Panc1 (cell line): ENCODE measurements at regions of chr9 and their contacts with region 1.

Region 1: GRCh38 chr9:101530077-101530711 is 3.5 kb upstream of the RNF20 start:
- DNase-seq: peak; percentile 61
- ATAC-seq: peak; percentile 65
- H3K4me3 ChIP-seq: no peak overlapping the region
- H3K27ac ChIP-seq: no peak overlapping the region
- H3K4me1 ChIP-seq: peaks cover 7% of the 10 kb centered on the region; the same call in 1 of the 2 replicates
- H3K27me3 ChIP-seq: no peaks in the 10 kb centered on the region
- CTCF ChIP-seq: peak; percentile 77

Region 2: DNA sequence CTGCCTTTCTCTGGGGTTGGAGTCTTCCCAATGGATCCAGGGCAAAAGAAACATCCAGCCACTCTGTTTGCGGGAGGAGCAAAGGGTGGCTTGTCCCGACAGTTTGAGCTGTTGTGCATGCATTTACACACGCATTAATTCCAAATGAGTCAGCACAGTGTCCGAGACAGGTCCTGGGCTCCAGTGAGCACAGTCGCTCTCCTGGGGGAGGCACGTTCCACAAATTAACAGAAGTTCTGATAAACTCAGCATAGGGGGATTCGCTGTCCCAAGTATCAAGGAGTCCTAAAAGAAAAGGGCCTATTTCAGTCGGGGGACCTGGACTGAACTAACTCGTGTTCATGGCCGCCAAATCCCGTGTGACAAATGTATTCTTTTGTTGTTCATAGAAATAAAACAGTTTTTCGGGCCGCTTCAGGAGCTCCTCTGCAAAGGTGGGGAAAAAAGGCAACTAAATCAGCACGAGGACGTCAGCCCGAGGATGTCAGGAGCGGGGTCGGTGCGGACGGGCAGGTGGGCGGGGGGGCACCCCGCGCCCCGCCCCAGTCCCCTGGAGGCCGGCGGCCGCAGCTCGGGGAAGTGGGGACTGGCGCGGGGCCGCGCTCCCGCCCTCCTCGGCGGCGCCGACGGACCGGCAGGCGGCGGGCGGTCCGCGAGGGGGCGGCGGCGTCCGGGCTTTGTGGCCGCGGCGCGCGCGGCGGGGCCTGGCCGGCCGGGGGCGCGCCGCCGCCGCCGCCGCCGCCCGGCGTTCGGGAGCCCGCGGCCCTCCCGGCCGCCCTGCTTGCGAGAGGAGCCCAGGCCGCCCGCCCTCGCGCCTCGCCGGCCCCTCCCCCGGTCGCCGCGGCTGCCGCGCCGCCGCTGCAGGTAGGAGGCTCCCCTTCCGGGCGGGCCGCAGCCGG is 1103.4 kb before region 1 on chr9 and contains the start of gene MSANTD3:
- CTCF ChIA-PET with region 1: no interaction called
- POLR2A ChIA-PET with region 1: interaction called, 15 read pairs
- in situ Hi-C with region 1: no loop called
- intact Hi-C with region 1: no loop called
- DNase-seq: no peak
- ATAC-seq: peak; percentile 84
- H3K4me3 ChIP-seq: peak within 1 kb of the TSS; percentile 72 to 90
- H3K27ac ChIP-seq: peak within 1 kb of the TSS; percentile 94
- H3K4me1 ChIP-seq: peaks cover 20% of the 10 kb centered on the region
- H3K27me3 ChIP-seq: no peaks in the 10 kb centered on the region
- CTCF ChIP-seq: 0 out of 2 replicates have a peak, but pooled peaks have one; percentile 16
- total RNA-seq, gene MSANTD3: 58.7 TPM

Region 3: DNA sequence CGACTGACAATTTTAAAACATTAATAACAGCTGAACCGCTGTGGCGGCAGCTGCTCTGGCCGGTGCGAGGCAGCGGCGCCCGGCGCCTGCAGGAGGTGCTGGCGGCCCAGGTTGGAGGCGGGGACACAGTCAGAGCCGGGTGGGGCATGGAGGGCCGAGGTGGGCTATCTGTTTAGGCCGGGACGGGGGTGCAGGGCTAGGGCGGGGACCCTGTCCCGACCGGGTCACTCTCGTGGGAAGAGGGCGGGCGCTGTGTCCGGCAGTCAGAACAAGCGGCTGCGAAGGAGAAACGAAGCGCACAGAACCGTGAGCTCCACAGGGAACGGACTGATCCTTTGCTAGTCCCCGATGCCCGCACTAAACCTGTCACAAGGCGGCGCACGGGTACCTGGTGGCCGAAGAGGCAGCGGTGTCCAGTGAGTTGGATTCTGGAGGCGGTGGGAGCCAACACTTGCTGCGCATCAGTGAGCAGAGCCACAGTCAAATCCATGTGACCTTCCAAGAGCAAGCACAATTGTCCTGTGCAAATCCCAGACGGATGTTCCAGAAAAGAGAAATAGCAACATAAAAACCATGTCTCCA is 81.0 kb before region 1 on chr9:
- CTCF ChIA-PET with region 1: interaction called, 5 read pairs
- POLR2A ChIA-PET with region 1: no interaction called
- in situ Hi-C with region 1: no loop called
- intact Hi-C with region 1: loop called (anchors 2 kb)
- DNase-seq: peak; percentile 51
- ATAC-seq: peak; percentile 100
- H3K4me3 ChIP-seq: peak overlapping the region; percentile 52 to 56
- H3K27ac ChIP-seq: no peak overlapping the region
- H3K4me1 ChIP-seq: no peaks in the 10 kb centered on the region
- H3K27me3 ChIP-seq: peaks cover 2% of the 10 kb centered on the region; the same call in 1 of the 2 replicates
- CTCF ChIP-seq: peak; percentile 93

Region 4: DNA sequence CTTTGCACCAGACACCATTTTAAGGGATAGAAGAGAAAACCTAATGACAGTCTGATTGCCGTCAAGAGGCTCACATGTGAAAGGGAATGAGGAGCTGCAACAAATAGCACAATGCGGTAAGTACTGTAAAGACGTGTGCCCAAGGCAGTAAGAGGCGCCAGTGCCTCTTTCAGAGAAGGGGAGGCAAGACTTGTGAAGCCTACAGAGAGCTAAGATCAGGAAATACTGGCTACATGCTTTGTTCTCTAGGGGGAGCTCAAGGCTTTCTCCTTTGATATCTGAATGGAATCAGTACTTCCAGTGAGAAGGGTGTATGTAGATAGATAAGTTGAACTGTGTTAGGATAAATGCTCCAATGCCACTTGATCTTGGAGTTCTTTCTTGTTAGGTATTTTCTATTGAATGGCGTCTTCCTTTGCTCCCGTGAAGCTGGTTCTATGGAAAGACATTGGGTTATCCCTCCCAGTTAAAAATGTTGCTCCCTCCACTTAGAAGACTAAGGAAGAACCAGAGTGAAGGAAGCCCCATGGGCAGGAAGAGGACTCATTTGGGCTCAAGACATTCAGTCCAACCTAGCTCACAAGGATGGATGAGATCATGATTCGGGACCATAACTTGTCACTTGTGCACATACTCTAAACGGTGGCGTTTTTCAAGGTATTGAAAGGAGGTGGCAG is 71.1 kb before region 1 on chr9:
- CTCF ChIA-PET with region 1: interaction called, 17 read pairs
- POLR2A ChIA-PET with region 1: interaction called, 6 read pairs
- in situ Hi-C with region 1: no loop called
- intact Hi-C with region 1: loop called (anchors 1 kb)
- DNase-seq: peak; percentile 55
- ATAC-seq: peak; percentile 99
- H3K4me3 ChIP-seq: no peak overlapping the region
- H3K27ac ChIP-seq: no peak overlapping the region
- H3K4me1 ChIP-seq: no peaks in the 10 kb centered on the region
- H3K27me3 ChIP-seq: no peaks in the 10 kb centered on the region
- CTCF ChIP-seq: peak; percentile 78